ENCODE measurements at regions of chr2 and their contacts with region 1.

Region 1: GRCh38 chr2:102147935-102148334 is 5.4 kb downstream of the IL1R1 start:
- DNase-seq: no peak
- ATAC-seq: peak in 1 of 4 donors; percentile 35
- H3K4me3 ChIP-seq: no peak overlapping the region
- H3K27ac ChIP-seq: peak overlapping the region in 2 of 12 donors; percentile 29 to 43
- H3K4me1 ChIP-seq: peaks cover 0 to 40% (median 19%) of the 10 kb centered on the region in 12 donors
- H3K27me3 ChIP-seq: no peaks in the 10 kb centered on the region
- CTCF ChIP-seq: no peak
- POLR2A ChIP-seq: no peak

Region 2: DNA sequence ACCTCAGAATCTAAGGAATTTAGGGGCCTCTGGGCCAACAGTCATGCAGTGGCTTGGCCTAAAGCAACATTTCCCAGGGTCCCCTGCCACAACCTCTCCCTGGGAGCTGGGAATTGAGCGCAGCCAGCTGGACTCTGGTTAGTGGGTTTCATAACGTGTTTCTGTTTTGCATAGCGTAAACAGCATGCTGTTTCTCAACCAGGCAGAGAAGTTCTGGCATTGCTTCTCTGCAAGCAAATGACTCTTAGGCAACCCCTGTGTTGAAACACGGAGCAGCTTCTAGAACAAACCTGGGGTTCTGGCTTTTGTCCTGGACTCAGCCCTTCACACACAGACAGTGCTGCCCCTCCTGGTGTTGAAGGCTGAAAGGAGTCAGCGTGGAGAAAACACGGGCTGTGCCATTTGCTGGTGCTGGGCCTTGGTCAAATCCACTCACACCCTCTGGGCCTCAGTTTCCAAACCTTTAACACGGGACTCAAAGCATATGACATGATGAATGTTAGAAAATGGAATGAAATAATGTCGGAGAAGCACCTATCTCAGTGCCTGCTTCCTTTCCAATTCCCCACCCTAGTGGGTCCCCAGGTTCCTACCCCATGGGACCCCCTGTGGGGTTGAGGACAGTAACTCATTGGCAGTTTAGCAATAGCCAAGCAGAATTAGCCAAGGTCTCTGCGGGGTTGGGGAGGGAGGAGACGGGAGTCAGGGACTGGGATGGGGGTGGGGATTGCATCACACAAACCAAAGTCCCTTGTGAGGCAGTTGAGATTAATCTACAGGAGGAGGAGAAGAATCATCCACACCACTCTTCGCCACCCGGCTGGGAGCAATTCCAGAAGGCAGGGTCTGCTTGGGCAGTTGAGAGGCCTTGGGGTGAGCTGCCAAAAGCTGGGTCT is 186.4 kb before region 1 on chr2:
- intact Hi-C with region 1: no loop called
- DNase-seq: peak; percentile 72 to 87 (median 83)
- ATAC-seq: peak; percentile 80 to 91 (median 90)
- H3K4me3 ChIP-seq: peak overlapping the region in 1 of 12 donors; percentile 35
- H3K27ac ChIP-seq: peak overlapping the region in 11 of 12 donors; percentile 39 to 87 (median 62)
- H3K4me1 ChIP-seq: peaks cover 0 to 49% (median 8%) of the 10 kb centered on the region in 12 donors
- H3K27me3 ChIP-seq: no peaks in the 10 kb centered on the region
- CTCF ChIP-seq: peak in 3 of 12 donors; percentile 4 to 14 (median 6)
- POLR2A ChIP-seq: no peak

Region 3: GRCh38 chr2:102037681-102038080 is 110.3 kb before region 1 on chr2:
- intact Hi-C with region 1: loop called in 1 of 10 experiments (anchors 5 kb)
- DNase-seq: peak in 1 of 5 donors; percentile 48
- ATAC-seq: peak; percentile 46 to 65 (median 58)
- H3K4me3 ChIP-seq: no peak overlapping the region
- H3K27ac ChIP-seq: peak overlapping the region; percentile 29 to 88 (median 70)
- H3K4me1 ChIP-seq: peaks cover 0 to 68% (median 16%) of the 10 kb centered on the region in 12 donors
- H3K27me3 ChIP-seq: no peaks in the 10 kb centered on the region
- CTCF ChIP-seq: no peak
- POLR2A ChIP-seq: no peak

Region 4: DNA sequence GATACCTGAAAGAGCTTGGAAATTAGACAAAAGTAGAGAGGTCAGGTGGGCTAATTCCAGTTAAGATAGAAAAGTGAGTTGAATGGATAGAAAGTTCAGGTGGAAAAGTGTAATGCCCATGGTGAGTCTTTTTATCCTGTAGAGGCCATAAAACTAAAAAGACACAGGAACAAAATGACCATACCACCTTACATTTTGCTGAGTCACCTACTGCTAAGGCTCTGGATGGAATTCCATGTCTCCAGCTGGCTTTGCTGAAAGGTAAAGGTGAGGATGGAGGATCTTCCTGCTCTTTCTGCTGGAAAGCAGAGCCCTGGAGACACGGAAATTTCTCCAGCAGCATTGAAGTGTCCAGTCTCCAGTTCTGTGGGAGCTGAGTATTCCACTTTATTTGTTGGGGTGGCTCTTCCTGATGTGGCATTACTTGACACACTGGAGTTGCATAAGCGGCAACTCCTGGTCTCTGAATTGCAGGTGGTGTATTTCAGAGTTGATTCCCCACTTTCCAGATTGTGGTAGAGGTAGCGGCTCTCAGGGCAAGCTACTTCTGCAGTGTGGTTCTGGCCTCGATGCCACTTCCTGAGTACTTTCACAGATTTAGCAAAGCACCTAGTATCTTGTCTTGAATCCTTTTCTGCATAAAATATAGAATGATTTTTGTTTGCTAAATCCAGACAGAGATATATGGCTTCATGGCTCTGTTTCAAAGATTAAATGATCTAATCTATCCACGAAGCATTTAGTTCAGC is 49.6 kb after region 1 on chr2:
- intact Hi-C with region 1: no loop called
- DNase-seq: no peak
- ATAC-seq: no peak
- H3K4me3 ChIP-seq: no peak overlapping the region
- H3K27ac ChIP-seq: no peak overlapping the region
- H3K4me1 ChIP-seq: no peaks in the 10 kb centered on the region
- H3K27me3 ChIP-seq: no peaks in the 10 kb centered on the region
- CTCF ChIP-seq: no peak
- POLR2A ChIP-seq: no peak

Measured in heart left ventricle (tissue), 16 donors.